ENCODE measurements at regions of chr13 and their contacts with region 1.

Region 1: DNA sequence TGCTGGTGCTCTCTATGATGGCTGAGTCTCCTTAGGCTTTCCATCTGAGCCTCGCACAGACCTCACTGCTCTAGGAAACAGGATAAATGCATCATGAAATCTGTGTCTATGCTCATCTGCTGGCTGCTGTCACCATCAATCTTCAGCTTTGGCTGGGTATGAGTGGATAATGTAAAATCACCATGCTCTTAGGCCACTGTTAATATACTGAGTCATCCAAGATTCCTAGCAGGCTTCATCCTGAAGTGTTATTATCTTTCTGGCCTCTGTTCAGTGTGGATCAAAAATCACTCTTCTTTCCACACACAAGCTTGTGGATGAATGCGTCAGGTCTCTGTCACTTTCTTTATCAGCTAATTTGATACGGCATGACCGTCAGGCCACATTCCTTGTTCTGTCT is 317.4 kb downstream of the NALCN start:
- DNase-seq: no peak
- H3K4me3 ChIP-seq: no peak overlapping the region
- H3K27ac ChIP-seq: no peak overlapping the region
- H3K4me1 ChIP-seq: no peaks in the 10 kb centered on the region
- H3K27me3 ChIP-seq: no peaks in the 10 kb centered on the region
- CTCF ChIP-seq: no peak
- POLR2A ChIP-seq: no peak

Region 2: DNA sequence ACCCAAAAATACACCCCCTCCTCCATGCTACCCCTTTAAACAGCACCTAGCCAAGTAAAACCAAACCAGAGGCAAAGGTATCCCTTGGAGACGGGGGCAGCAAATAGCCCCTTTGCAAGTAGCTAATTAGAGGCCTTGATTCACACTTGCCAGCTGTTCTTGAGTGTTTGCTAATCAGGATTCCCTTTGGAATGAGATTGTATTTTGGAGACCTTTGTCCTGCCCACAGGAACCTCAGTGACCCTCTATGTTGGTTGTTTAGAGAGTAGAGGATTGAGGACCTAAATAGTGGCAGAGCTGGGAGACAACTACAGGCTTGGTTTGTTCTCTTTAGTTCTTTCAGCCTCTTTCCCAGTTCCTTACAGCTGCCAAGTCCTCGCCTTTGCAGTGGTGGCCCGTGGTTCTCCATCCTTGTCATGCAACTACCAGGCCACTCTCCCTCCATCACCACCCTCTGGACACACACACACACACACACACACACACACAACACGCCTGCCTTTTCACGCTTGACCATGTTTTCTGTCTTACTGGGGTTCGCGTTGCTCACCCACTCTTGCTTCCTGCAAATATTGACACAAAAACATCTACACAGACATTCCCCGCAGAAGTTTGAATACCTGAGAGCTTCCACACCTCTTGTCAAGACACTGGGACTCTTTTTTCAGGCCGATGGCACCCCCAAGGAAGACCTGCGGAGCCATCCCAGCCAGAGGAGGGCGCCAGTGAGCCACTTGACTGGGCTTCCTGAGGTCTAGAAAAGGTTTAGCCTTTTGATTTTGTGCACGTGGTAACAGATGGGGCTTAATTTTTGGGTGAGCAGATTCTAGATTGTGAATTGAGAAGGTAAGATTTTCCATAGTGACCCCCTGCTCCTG is 1711.7 kb before region 1 on chr13:
- intact Hi-C with region 1: loop called (anchors 5 kb)
- DNase-seq: no peak
- H3K4me3 ChIP-seq: no peak overlapping the region
- H3K27ac ChIP-seq: no peak overlapping the region
- H3K4me1 ChIP-seq: no peaks in the 10 kb centered on the region
- H3K27me3 ChIP-seq: no peaks in the 10 kb centered on the region
- CTCF ChIP-seq: peak in 2 of 3 donors; percentile 8 to 25
- POLR2A ChIP-seq: no peak

Region 3: DNA sequence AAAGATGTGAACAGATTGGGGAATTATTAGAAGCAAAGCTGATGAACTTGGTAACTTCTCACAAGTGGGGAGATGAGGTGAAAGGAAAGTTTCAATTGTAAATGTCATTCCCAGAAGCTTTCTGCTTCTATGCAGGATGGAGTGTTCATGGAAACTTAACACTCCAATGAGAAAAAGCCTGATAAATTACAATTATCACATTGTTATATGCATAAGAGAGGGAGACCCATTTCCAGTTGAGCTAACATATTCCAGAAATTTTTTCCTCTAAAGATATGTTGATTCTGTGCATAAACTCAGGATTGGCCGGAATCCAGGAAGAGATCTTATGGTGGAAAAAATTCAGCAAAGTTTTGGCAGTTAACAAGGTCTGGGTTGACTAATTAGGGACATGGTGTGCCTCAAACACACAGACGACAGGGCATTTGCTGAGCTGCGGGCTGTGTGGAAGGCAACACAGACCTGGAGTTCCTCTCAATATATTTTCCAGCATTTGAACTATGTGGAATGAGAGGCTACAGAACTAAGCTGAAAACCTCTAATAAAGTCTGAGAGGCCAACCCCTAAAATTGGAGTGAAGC is 1367.8 kb after region 1 on chr13:
- intact Hi-C with region 1: loop called (anchors 5 kb)
- DNase-seq: no peak
- H3K4me3 ChIP-seq: no peak overlapping the region
- H3K27ac ChIP-seq: no peak overlapping the region
- H3K4me1 ChIP-seq: no peaks in the 10 kb centered on the region
- H3K27me3 ChIP-seq: no peaks in the 10 kb centered on the region
- CTCF ChIP-seq: no peak
- POLR2A ChIP-seq: no peak

Region 4: DNA sequence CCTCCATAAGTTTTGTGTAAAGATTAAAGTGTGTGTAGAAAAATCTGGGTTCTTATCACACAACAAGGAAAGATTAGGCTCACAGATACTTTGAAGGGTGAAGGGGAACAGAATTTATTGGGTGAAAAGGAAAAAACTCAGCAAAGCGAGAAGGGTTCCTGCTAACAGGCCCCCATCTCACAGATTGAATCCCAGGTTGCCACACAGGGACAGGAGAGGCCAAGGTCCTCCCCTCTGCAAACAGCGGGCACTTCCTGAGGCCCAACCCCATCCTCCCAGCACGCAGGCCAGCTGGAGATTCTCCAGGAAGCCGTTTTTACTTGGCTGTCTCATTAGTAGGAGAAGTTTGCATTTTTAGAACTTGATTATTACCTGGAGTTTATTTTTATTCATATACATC is 1731.8 kb after region 1 on chr13:
- intact Hi-C with region 1: no loop called
- DNase-seq: no peak
- H3K4me3 ChIP-seq: no peak overlapping the region
- H3K27ac ChIP-seq: no peak overlapping the region
- H3K4me1 ChIP-seq: no peaks in the 10 kb centered on the region
- H3K27me3 ChIP-seq: no peaks in the 10 kb centered on the region
- CTCF ChIP-seq: no peak
- POLR2A ChIP-seq: no peak

Measured in breast epithelium (tissue), 4 donors.